Prostate gland (tissue), 2 donors: ENCODE measurements at regions of chr1 and their contacts with region 1.

Region 1: DNA sequence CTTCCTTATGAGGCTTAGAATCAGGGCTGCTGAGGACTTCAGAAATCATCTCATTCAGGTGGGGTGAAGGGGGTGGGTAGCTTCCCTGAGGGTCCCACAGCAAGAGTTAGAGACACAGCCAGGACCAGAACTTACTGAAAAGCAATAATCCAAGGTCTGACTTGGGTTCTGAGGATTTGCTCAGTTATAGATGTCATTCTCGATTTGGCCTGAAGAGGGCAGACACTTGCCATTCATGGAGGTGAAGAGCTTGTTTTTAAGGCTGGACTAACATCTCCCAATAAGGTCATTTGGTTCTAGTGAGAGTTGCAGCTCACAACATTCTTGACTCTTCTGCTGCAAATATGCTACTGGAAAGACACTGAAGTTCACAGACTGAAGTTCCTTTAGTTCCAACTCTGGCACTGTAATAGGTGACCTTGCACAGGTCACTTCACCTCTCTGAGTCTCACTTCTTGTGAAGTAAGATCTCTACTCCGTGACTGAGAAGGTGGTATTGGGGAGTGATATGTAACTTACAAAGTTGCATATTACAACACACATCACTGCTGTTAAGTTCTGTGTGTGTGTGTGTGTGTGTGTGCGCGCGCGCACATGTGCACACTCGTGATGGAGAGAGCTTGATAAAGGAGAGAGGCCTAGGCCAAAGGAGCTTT is 69.8 kb upstream of the DIRAS3 start:
- DNase-seq: peak; percentile 66
- H3K4me3 ChIP-seq: no peak overlapping the region
- H3K27ac ChIP-seq: peak overlapping the region in 1 of 2 donors; percentile 4
- H3K4me1 ChIP-seq: no peaks in the 10 kb centered on the region
- H3K27me3 ChIP-seq: no peaks in the 10 kb centered on the region
- CTCF ChIP-seq: peak; percentile 59 to 87 (median 81)
- POLR2A ChIP-seq: no peak

Region 2: GRCh38 chr1:68321084-68321685 is 200.9 kb after region 1 on chr1:
- intact Hi-C with region 1: loop called (anchors 5 kb)
- DNase-seq: peak; percentile 71
- H3K4me3 ChIP-seq: no peak overlapping the region
- H3K27ac ChIP-seq: no peak overlapping the region
- H3K4me1 ChIP-seq: no peaks in the 10 kb centered on the region
- H3K27me3 ChIP-seq: no peaks in the 10 kb centered on the region
- CTCF ChIP-seq: peak; percentile 40 to 77 (median 72)
- POLR2A ChIP-seq: no peak

Region 3: GRCh38 chr1:68346188-68346808 is 226.0 kb after region 1 on chr1:
- intact Hi-C with region 1: loop called (anchors 2 kb)
- DNase-seq: no peak
- H3K4me3 ChIP-seq: no peak overlapping the region
- H3K27ac ChIP-seq: no peak overlapping the region
- H3K4me1 ChIP-seq: no peaks in the 10 kb centered on the region
- H3K27me3 ChIP-seq: no peaks in the 10 kb centered on the region
- CTCF ChIP-seq: peak in 3 of 4 experiments; percentile 38 to 49 (median 44)
- POLR2A ChIP-seq: no peak